Naive thymus-derived CD4-positive, alpha-beta T cell (primary cell): ENCODE measurements at regions of chr13 and their contacts with region 1.

Region 1: GRCh38 chr13:50365408-50366391 is 350.5 kb downstream of the KCNRG start:
- DNase-seq: peak in 4 of 9 donors; percentile 9 to 33 (median 16)
- ATAC-seq: peak; percentile 71
- H3K4me3 ChIP-seq: peak overlapping the region; percentile 7
- H3K4me3 Mint-ChIP-seq: peak overlapping the region in 9 of 10 donors; percentile 7 to 78 (median 68)
- H3K27ac ChIP-seq: peak overlapping the region; percentile 53
- H3K27ac Mint-ChIP-seq: peak overlapping the region; percentile 51 to 88 (median 82)
- H3K4me1 ChIP-seq: peaks cover 6 to 28% of the 10 kb centered on the region in 2 donors
- H3K4me1 Mint-ChIP-seq: peaks cover 14 to 39% (median 25%) of the 10 kb centered on the region in 7 donors
- H3K27me3 ChIP-seq: no peaks in the 10 kb centered on the region
- H3K27me3 Mint-ChIP-seq: peaks cover 0 to 53% (median 5%) of the 10 kb centered on the region in 5 donors

Region 2: DNA sequence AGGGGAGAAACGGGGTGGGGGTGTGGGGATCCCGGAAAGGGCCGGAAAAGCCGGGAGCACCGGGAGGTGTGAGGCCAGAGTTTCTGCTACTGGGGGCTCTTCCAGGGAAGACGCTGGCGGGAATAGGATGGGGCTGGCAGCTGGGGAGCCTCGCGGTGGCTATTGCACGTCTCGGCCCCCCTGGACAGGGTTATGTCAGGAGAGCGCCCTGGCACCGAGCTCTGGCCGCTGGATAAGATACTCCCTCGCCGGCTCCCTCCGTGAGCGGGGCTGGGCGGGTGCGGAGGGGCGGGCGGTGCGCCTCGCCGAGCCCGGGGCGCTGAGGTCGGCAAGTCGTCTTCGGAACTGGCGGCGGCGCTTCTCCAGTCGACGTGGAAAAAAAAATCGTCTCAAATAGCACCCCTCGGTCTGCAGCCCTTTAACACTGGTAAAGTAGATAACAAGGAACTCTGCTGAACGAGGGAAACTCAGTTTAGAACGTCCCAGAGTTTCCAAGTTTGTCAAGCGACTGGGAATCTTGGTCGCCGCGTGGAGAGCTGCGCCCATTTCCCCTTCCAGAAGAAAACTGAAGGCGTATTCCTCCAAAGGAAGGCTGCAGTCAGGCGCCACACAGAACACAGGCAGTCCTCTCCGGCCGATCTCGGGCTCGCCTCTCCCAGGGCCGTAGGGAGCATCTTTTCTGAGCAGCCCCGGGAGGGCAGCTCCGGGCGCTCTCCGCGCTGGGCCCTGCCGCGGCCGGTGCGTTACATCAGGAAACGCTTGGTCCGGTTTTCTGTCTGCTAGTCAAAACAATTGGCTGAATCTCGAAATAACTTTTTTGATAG is 235.4 kb before region 1 on chr13:
- CTCF ChIA-PET with region 1: no interaction called
- POLR2A ChIA-PET with region 1: interaction called, 4 read pairs
- intact Hi-C with region 1: loop called in 1 of 2 experiments (anchors 2 kb)
- DNase-seq: peak in 5 of 9 donors; percentile 22 to 47 (median 38)
- ATAC-seq: peak; percentile 17
- H3K4me3 ChIP-seq: peak overlapping the region; percentile 46
- H3K4me3 Mint-ChIP-seq: peak overlapping the region; percentile 70 to 94 (median 79)
- H3K27ac ChIP-seq: no peak overlapping the region
- H3K27ac Mint-ChIP-seq: peak overlapping the region; percentile 34 to 82 (median 62)
- H3K4me1 ChIP-seq: peaks cover 46 to 52% of the 10 kb centered on the region in 2 donors
- H3K4me1 Mint-ChIP-seq: peaks cover 21 to 64% (median 53%) of the 10 kb centered on the region in 7 donors
- H3K27me3 ChIP-seq: peaks cover 30 to 59% of the 10 kb centered on the region in 2 donors
- H3K27me3 Mint-ChIP-seq: peaks cover 38 to 71% (median 61%) of the 10 kb centered on the region in 5 donors

Region 3: DNA sequence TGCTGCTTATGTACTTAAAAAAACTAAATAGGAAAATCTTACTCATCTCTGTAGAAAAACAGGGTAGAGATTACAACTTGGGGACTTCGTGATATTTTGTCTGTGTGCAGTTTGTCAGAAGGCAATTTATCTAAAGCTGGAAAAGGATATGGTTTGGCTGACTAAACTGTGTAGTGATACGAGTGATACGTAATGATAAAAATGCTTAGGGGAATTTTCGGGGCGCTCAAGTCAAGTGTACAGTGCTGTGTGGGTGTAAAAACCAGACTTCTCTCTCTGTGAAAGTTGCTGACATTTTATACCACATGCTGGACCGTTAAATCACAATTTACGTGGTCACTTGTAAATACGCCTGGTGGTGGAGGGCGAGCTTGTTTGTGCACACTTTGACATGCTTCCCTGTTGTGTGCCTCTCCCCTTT is 128.8 kb before region 1 on chr13:
- CTCF ChIA-PET with region 1: no interaction called
- POLR2A ChIA-PET with region 1: no interaction called
- intact Hi-C with region 1: loop called in 1 of 2 experiments (anchors 2 kb)
- DNase-seq: peak in 4 of 9 donors; percentile 5 to 38 (median 14)
- ATAC-seq: peak; percentile 88
- H3K4me3 ChIP-seq: peak overlapping the region; percentile 43
- H3K4me3 Mint-ChIP-seq: peak overlapping the region; percentile 38 to 78 (median 65)
- H3K27ac ChIP-seq: no peak overlapping the region
- H3K27ac Mint-ChIP-seq: peak overlapping the region; percentile 3 to 66 (median 15)
- H3K4me1 ChIP-seq: peaks cover 5 to 8% of the 10 kb centered on the region in 2 donors
- H3K4me1 Mint-ChIP-seq: peaks cover 6 to 40% (median 19%) of the 10 kb centered on the region in 7 donors
- H3K27me3 ChIP-seq: no peaks in the 10 kb centered on the region
- H3K27me3 Mint-ChIP-seq: peaks cover 0 to 68% (median 0%) of the 10 kb centered on the region in 5 donors

Region 4: DNA sequence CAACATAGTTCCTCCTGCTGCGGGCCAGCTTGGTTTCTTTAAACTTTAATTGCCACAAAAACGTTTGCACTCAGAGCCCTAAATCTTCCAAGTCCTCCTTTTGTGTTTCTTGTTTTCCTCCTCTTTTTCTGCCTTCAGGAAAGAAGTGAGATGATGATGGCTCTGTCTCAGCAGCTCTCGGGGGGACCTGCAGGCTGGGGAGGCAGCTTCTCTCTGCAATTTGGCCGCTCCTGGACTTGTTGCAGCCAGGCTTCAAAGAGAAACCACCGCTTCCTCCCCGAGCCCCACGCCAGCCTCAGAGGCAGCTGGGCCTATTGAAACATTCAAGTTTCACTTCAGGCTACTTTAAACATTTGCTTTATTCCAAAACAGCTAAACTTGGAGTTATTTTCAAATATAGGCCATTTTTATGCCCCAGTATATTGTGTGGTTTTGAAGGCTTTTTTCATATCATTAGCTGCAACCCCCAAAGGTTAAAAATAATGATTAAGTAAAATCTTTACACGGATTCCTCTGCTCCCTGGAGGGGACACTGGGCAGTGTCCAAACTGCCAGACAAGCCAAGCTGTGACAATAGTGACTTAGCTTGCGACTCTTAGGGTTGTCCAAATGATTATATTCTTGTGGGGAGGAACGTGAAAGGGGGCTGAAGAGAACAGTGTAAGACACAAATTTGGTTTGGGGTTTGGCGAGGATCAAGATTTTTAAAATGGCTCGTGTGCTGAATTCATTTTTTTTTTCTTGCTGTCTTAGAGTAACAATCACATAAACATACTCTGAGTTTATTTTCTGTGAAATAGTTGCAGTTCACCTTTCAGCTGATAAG is 147.0 kb after region 1 on chr13:
- CTCF ChIA-PET with region 1: no interaction called
- POLR2A ChIA-PET with region 1: no interaction called
- intact Hi-C with region 1: loop called in 1 of 2 experiments (anchors 10 kb)
- DNase-seq: peak in 7 of 9 donors; percentile 11 to 41 (median 27)
- ATAC-seq: peak; percentile 76
- H3K4me3 ChIP-seq: peak overlapping the region; percentile 22
- H3K4me3 Mint-ChIP-seq: no peak overlapping the region
- H3K27ac ChIP-seq: peak overlapping the region; percentile 34
- H3K27ac Mint-ChIP-seq: no peak overlapping the region
- H3K4me1 ChIP-seq: peaks cover 15 to 16% of the 10 kb centered on the region in 2 donors
- H3K4me1 Mint-ChIP-seq: peaks cover 0 to 3% (median 0%) of the 10 kb centered on the region in 7 donors
- H3K27me3 ChIP-seq: no peaks in the 10 kb centered on the region
- H3K27me3 Mint-ChIP-seq: peaks cover 0 to 13% (median 0%) of the 10 kb centered on the region in 5 donors

Region 5: GRCh38 chr13:50893211-50893852 is 527.6 kb after region 1 on chr13:
- CTCF ChIA-PET with region 1: no interaction called
- POLR2A ChIA-PET with region 1: no interaction called
- intact Hi-C with region 1: loop called in 1 of 2 experiments (anchors 2 kb)
- DNase-seq: peak in 7 of 9 donors; percentile 34 to 68 (median 55)
- ATAC-seq: peak; percentile 91
- H3K4me3 ChIP-seq: peak overlapping the region; percentile 30
- H3K4me3 Mint-ChIP-seq: peak overlapping the region; percentile 67 to 88 (median 82)
- H3K27ac ChIP-seq: peak overlapping the region; percentile 69
- H3K27ac Mint-ChIP-seq: peak overlapping the region; percentile 82 to 98 (median 95)
- H3K4me1 ChIP-seq: peaks cover 16 to 27% of the 10 kb centered on the region in 2 donors
- H3K4me1 Mint-ChIP-seq: peaks cover 26 to 50% (median 47%) of the 10 kb centered on the region in 7 donors
- H3K27me3 ChIP-seq: no peaks in the 10 kb centered on the region
- H3K27me3 Mint-ChIP-seq: no peaks in the 10 kb centered on the region